IMR-90 (cell line): ENCODE measurements at regions of chr4 and their contacts with region 1.

Region 1: GRCh38 chr4:151169223-151169622 is 69.8 kb downstream of the RPS3A start:
- DNase-seq: peak; percentile 99
- ATAC-seq: peak; percentile 87
- H3K4me3 ChIP-seq: no peak overlapping the region
- H3K27ac ChIP-seq: no peak overlapping the region
- H3K4me1 ChIP-seq: peaks cover 10% of the 10 kb centered on the region
- H3K27me3 ChIP-seq: no peaks in the 10 kb centered on the region
- CTCF ChIP-seq: 0 out of 2 replicates have a peak, but pooled peaks have one; percentile 4
- POLR2A ChIP-seq: no peak
- RAD21 ChIP-seq: peak; percentile 21; the same call in 1 of the 2 replicates

Region 2: DNA sequence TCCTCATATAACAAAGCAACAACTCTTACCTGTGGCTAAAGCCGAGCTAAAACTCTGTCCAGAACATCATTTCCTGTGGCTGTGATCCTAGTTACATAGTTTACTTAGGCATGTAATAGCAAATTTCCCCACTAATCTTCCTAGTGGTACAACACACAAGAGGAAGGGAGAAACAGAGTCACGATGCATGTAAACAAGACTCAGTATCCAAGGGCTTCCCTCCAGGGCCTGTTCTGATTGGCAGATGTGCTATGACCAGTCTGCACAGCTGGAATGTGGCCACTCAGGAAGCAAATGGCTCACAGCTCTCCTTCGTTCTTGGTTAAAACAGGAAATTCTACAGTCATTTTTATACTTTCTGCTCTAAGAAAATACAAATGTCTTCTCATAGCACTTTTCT is 58.5 kb after region 1 on chr4:
- CTCF ChIA-PET with region 1: no interaction called
- POLR2A ChIA-PET with region 1: no interaction called
- dilution Hi-C with region 1: no loop called
- in situ Hi-C with region 1: no loop called
- intact Hi-C with region 1: loop called (anchors 2 kb)
- DNase-seq: peak; percentile 78
- ATAC-seq: peak; percentile 79
- H3K4me3 ChIP-seq: peak overlapping the region; percentile 20; the same call in 1 of the 2 replicates
- H3K27ac ChIP-seq: peak overlapping the region; percentile 68; the same call in 1 of the 2 replicates
- H3K4me1 ChIP-seq: peaks cover 4% of the 10 kb centered on the region
- H3K27me3 ChIP-seq: no peaks in the 10 kb centered on the region
- CTCF ChIP-seq: no peak
- POLR2A ChIP-seq: no peak
- RAD21 ChIP-seq: no peak

Region 3: GRCh38 chr4:151276787-151277562 is 107.8 kb after region 1 on chr4 and contains the start of gene PRSS48:
- CTCF ChIA-PET with region 1: interaction called, 4 read pairs
- POLR2A ChIA-PET with region 1: no interaction called
- dilution Hi-C with region 1: no loop called
- in situ Hi-C with region 1: no loop called
- intact Hi-C with region 1: loop called (anchors 5 kb)
- DNase-seq: peak; percentile 32
- ATAC-seq: peak; percentile 81
- H3K4me3 ChIP-seq: no peak within 1 kb of the TSS
- H3K27ac ChIP-seq: no peak within 1 kb of the TSS
- H3K4me1 ChIP-seq: 0 out of 2 replicates have a peak, but pooled peaks cover 1% of the 10 kb centered on the region
- H3K27me3 ChIP-seq: no peaks in the 10 kb centered on the region
- CTCF ChIP-seq: peak; percentile 70
- POLR2A ChIP-seq: no peak
- RAD21 ChIP-seq: peak; percentile 75
- total RNA-seq, gene PRSS48: not detected in 2 replicates

Region 4: DNA sequence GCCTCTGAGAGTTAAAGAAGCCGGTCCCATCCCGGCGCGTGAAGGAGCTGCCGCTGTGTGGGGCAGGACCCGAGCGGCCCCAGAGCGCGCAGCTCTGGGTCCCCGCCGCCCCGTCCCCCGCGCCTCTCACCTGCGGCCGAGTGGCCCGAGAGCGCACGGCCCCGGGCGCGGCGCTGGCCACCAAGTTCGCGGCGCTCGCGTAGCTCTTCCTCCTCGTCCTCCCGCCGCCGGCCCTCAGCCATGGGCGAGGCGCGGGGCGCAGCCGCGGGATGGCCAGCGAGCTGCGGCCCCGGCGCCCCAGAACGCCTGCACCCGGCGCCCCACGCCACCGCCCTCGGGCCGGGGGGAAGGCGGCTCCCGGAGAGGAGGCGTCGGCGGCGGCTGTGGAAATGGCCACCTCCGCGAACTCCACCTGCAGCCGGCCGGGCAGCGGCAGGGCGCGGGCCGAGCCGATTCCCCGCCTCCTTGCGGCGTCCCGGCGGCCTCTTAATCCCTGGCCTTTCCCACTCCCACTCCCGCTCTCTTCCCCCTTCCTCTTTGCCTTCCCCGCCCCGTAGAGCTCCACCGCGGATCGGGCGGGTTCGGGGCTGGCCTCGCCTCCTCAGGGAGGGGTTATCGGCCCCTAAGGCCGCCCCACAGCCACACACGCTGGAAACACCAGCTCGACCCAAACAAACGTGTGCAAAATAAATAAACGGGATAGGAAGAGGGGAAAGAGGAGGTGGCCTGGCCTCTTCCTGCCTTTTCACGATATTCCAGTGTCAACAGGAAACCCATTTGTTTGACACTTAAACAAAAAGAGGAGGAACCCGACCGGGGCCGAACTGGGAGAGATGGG is 156.1 kb after region 1 on chr4 and contains the start of gene SH3D19:
- CTCF ChIA-PET with region 1: no interaction called
- POLR2A ChIA-PET with region 1: no interaction called
- dilution Hi-C with region 1: no loop called
- in situ Hi-C with region 1: no loop called
- intact Hi-C with region 1: loop called (anchors 10 kb)
- DNase-seq: peak; percentile 19
- ATAC-seq: peak; percentile 91
- H3K4me3 ChIP-seq: peak within 1 kb of the TSS; percentile 53
- H3K27ac ChIP-seq: no peak within 1 kb of the TSS
- H3K4me1 ChIP-seq: no peaks in the 10 kb centered on the region
- H3K27me3 ChIP-seq: no peaks in the 10 kb centered on the region; the same call in 1 of the 2 replicates
- CTCF ChIP-seq: no peak
- POLR2A ChIP-seq: no peak
- RAD21 ChIP-seq: no peak
- total RNA-seq, gene SH3D19: 27.2 and 29.7 TPM in 2 replicates

Region 5: DNA sequence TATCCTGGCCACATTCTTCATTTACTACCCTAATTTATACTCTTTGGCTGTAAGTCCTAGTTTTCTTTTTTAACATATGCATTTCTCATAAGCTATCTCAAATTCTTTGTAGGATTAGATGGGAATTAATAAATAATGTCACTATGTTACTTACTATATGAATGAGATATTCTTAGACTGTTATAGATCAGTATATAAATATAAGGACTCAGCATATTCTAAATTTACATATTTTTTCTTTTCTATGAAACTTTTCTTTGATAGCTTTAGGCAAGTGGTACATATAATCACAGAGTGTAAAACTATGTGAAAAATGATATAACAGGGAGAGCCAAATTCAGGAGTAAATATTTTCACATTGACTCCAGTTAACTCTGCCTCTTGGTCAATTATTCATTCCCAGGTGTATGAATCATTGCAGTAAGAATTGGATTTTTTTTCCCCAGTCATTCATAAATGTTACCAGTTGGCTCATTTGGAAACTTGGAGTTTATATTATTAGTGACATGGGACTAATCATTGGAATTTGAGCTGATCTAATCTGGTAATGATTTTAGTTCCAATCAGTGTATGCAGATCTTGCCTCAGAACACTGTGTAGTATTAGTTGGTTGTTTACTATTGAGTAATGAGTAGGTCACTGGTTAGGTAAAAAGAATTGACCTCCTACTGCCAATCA is 265.1 kb after region 1 on chr4:
- CTCF ChIA-PET with region 1: no interaction called
- POLR2A ChIA-PET with region 1: no interaction called
- dilution Hi-C with region 1: no loop called
- in situ Hi-C with region 1: no loop called
- intact Hi-C with region 1: no loop called
- DNase-seq: peak; percentile 19
- ATAC-seq: peak; percentile 46
- H3K4me3 ChIP-seq: no peak overlapping the region
- H3K27ac ChIP-seq: no peak overlapping the region
- H3K4me1 ChIP-seq: no peaks in the 10 kb centered on the region; the same call in 1 of the 2 replicates
- H3K27me3 ChIP-seq: no peaks in the 10 kb centered on the region; the same call in 1 of the 2 replicates
- CTCF ChIP-seq: no peak
- POLR2A ChIP-seq: no peak
- RAD21 ChIP-seq: no peak

Region 6: GRCh38 chr4:151652841-151653547 is 483.8 kb after region 1 on chr4:
- CTCF ChIA-PET with region 1: no interaction called
- POLR2A ChIA-PET with region 1: no interaction called
- dilution Hi-C with region 1: no loop called
- in situ Hi-C with region 1: no loop called
- intact Hi-C with region 1: no loop called
- DNase-seq: no peak
- ATAC-seq: no peak
- H3K4me3 ChIP-seq: no peak overlapping the region
- H3K27ac ChIP-seq: no peak overlapping the region
- H3K4me1 ChIP-seq: no peaks in the 10 kb centered on the region
- H3K27me3 ChIP-seq: peaks cover 13% of the 10 kb centered on the region
- CTCF ChIP-seq: no peak
- POLR2A ChIP-seq: no peak
- RAD21 ChIP-seq: no peak